ENCODE measurements at regions of chr11 and their contacts with region 1.

Region 1: GRCh38 chr11:69909561-69910496 is 90.6 kb upstream of the FGF3 start:
- DNase-seq: no peak
- ATAC-seq: no peak
- H3K4me3 ChIP-seq: no peak overlapping the region
- H3K27ac ChIP-seq: no peak overlapping the region
- H3K4me1 ChIP-seq: peaks cover 28% of the 10 kb centered on the region
- H3K27me3 ChIP-seq: no peaks in the 10 kb centered on the region
- CTCF ChIP-seq: peak in 6 of 7 experiments; percentile 27 to 47 (median 40)
- POLR2A ChIP-seq: no peak

Region 2: DNA sequence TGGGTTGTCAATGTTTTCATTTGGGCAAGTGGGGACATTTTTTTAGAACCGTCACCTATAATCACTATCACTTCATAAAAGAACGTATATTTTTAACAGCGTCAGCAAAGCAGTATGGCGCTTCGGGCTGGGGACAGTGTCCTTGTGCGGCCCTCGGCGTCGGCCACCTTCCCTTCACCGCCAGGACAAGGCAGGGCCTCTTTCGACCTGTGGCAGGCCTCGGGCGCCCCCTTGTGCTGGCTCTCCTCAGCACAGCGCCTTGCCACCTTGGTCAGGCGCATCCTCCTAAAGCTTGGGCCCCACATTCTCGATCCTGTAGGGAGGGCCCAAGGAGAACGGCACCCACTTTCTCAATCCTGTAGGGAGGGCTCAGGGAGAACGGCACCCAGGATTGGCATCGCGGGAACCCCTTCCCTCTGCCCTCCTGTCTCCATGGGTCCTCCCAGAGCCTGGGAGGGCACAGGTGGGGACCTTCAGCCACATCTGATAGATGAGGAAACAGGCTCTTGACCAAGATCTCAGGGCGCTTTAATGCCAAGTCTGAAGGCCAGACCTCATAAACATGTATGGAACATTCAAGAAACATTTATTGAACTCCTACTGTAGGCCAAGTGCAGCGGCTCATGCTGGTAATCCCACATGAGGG is 281.8 kb after region 1 on chr11:
- intact Hi-C with region 1: loop called (anchors 5 kb)
- DNase-seq: peak; percentile 72 to 84 (median 76)
- ATAC-seq: peak; percentile 82
- H3K4me3 ChIP-seq: no peak overlapping the region
- H3K27ac ChIP-seq: no peak overlapping the region
- H3K4me1 ChIP-seq: no peaks in the 10 kb centered on the region
- H3K27me3 ChIP-seq: no peaks in the 10 kb centered on the region
- CTCF ChIP-seq: peak; percentile 68 to 85 (median 73)
- POLR2A ChIP-seq: no peak

Measured in body of pancreas (tissue), 4 donors.